ENCODE measurements at regions of chr19 and their contacts with region 1.

Region 1: DNA sequence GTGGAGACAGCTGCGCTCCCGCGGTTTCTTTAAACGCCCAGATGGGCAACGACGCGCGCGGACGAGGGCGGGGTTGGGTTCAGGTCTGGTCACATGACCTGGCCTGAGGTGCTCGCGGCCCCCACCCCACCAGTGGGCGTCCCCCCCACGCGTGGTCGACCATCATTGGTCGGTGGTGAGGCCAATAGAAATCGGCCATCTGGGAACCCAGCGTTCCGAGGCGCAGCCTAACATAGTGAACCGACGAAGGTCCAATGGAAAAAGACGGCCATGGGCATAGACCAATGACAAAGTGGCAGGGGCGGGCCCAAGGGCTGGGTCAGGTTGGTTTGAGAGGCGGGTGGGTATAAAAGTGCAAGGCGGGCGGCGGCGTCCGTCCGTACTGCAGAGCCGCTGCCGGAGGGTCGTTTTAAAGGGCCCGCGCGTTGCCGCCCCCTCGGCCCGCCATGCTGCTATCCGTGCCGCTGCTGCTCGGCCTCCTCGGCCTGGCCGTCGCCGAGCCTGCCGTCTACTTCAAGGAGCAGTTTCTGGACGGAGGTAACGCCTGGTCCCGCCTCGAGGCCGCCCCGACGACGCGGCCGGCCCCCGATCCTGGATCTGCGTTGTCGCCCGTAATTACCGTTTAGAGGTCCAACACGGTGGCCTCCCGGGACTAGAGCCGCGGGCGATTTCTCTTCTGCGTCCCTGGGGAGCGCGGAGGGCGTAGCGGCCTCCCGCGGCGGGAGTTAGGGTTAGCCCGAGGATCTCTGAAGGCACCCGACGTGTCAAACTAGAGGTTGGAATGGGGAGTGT is at the start of gene CALR:
- DNase-seq: peak; percentile 100
- H3K4me3 ChIP-seq: peak within 1 kb of the TSS; percentile 89 to 100 (median 98)
- H3K27ac ChIP-seq: peak within 1 kb of the TSS; percentile 87 to 96 (median 94)
- H3K4me1 ChIP-seq: peaks cover 30 to 66% (median 57%) of the 10 kb centered on the region in 4 donors
- H3K27me3 ChIP-seq: no peaks in the 10 kb centered on the region
- CTCF ChIP-seq: peak in 3 of 7 experiments; percentile 8 to 20 (median 9)
- EP300 ChIP-seq: no peak
- POLR2A ChIP-seq: peak in 2 of 4 donors; percentile 99
- total RNA-seq, gene CALR: 337 to 947 (median 504) TPM

Region 2: GRCh38 chr19:12881172-12881808 is 57.1 kb before region 1 on chr19 and contains the start of gene DNASE2:
- intact Hi-C with region 1: loop called (anchors 10 kb)
- DNase-seq: peak; percentile 97 to 98
- H3K4me3 ChIP-seq: peak within 1 kb of the TSS; percentile 69 to 83 (median 80)
- H3K27ac ChIP-seq: peak within 1 kb of the TSS; percentile 78 to 93 (median 91)
- H3K4me1 ChIP-seq: peaks cover 22 to 50% (median 42%) of the 10 kb centered on the region in 4 donors
- H3K27me3 ChIP-seq: peaks cover 0 to 23% (median 12%) of the 10 kb centered on the region in 3 donors
- CTCF ChIP-seq: no peak
- EP300 ChIP-seq: no peak
- POLR2A ChIP-seq: peak in 2 of 4 donors; percentile 65 to 90
- total RNA-seq, gene DNASE2: 11.9 to 53.1 (median 30.4) TPM

Region 3: GRCh38 chr19:13060964-13061927 is 122.8 kb after region 1 on chr19:
- intact Hi-C with region 1: no loop called
- DNase-seq: peak; percentile 87 to 95
- H3K4me3 ChIP-seq: peak overlapping the region; percentile 37 to 47 (median 44)
- H3K27ac ChIP-seq: peak overlapping the region; percentile 32 to 95 (median 67)
- H3K4me1 ChIP-seq: peaks cover 69 to 100% (median 85%) of the 10 kb centered on the region in 4 donors
- H3K27me3 ChIP-seq: no peaks in the 10 kb centered on the region
- CTCF ChIP-seq: peak in 5 of 7 experiments; percentile 91 to 96 (median 94)
- EP300 ChIP-seq: no peak
- POLR2A ChIP-seq: no peak

Region 4: DNA sequence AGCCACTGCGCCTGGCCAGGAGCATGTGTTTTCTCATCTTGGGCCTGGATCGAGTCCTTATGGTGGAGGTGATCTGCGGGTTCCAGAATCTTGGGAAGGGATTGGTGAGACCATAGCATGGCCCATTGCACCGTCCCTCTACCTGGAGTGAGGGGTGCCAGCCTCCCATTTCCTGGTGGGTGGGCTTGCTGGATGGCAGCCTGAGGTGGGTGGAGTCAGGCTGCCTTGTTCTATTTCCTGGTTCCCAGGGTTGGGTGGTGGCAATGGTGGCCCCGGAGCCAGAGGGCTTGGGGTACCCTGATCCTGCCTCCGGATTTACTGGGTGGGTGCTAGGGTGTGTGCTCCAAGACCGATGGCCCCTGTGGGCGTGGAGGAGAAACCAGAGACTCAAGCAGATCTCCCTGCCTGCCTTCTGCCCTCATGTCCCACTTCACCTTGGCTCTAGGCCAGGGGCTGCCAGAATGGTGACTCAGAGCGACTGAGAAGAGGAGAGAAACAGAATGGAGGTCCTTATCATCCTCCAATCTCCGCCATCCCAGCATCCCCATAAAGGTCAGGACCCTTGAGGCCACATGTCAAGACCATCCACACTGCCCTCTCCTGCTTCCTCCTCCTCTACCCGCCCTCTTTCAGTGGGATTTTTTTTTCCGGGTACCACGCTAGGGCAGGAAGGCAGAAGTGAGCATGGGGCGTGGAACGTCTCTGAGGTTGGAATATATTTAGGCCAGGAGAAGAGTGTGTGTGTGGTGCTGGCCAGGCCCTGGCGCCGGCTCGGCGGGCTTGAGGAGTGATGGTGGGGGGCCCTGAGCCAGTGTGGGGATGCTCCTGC is 233.9 kb after region 1 on chr19:
- intact Hi-C with region 1: no loop called
- DNase-seq: peak; percentile 85 to 88
- H3K4me3 ChIP-seq: no peak overlapping the region
- H3K27ac ChIP-seq: peak overlapping the region; percentile 67 to 84 (median 78)
- H3K4me1 ChIP-seq: peaks cover 26 to 52% (median 39%) of the 10 kb centered on the region in 4 donors
- H3K27me3 ChIP-seq: no peaks in the 10 kb centered on the region
- CTCF ChIP-seq: no peak
- EP300 ChIP-seq: no peak
- POLR2A ChIP-seq: no peak